ENCODE measurements at regions of chr1 and their contacts with region 1.

Region 1: DNA sequence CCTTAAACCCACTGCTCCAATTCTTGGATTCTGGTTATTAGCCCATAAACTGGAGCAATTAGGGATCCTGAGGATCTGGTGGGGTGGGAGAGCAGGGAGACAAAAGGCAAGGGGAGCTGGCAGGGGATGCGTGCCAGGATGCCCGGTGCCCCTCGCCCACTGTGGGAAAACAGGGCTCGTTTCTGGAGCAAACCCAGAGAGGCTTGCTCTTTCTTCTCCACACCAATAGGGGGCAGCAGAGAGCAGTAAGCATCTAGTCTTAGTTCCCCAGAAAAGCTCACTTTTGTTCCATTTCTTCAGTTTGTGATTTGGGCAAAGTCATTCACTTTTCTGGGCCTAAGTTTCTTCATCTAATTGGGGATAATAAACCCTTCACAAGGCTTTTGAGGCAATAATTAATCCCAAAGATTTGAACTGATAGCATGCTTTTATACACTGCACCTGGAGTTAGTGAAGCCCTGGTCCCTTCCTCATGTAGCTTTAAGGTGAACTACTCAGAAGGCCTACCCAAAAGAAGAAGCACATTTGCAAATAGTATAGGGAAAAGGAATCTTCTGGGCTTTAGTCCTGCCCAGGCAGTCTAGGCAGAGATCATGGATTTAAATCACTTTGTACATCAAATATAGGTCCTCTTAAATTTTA is 160.6 kb upstream of the USP24 start:
- DNase-seq: no peak
- H3K4me3 ChIP-seq: no peak overlapping the region
- H3K27me3 ChIP-seq: no peaks in the 10 kb centered on the region
- CTCF ChIP-seq: peak; percentile 92

Region 2: DNA sequence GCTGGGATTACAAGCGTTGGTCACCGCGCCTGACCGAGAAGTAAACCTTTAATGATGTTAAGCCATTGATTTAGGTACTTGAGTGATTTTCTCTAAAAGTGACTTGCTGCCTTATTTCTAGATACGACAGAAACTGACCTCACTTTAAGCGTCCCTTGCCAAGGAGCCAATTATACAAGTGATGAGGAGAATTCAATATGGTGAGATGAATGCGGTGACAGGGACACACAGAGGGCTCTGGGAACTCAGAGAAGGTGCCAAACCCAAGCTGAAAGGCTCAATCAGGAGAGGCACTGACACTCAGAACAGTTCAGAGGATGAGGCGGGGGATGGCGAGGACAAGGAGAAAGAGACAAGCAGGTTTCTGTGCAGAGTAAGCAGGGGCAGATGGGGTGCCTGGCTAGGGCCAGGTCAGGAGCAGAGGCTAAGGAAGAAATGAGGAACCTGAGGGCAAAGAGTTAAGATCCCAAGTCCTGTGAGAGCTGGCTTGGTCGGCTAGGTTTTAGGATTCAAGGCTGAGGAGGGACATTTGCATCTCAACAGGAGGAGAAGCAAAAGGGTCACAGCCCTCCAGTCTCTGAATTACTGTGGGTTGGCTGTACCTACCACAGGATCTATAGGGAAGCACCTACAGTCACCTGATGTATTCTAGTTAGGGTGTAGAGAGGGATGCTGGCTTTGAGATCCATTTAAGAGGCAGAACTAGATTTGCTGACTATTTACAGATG is 77.4 kb before region 1 on chr1:
- CTCF ChIA-PET with region 1: no interaction called
- POLR2A ChIA-PET with region 1: no interaction called
- DNase-seq: no peak
- H3K4me3 ChIP-seq: no peak overlapping the region
- H3K27me3 ChIP-seq: no peaks in the 10 kb centered on the region; the same call in 1 of the 2 replicates
- CTCF ChIP-seq: no peak

Region 3: GRCh38 chr1:55362558-55362957 is 13.2 kb before region 1 on chr1:
- CTCF ChIA-PET with region 1: interaction called, 21 read pairs
- POLR2A ChIA-PET with region 1: no interaction called
- DNase-seq: peak; percentile 65
- H3K4me3 ChIP-seq: no peak overlapping the region
- H3K27me3 ChIP-seq: no peaks in the 10 kb centered on the region
- CTCF ChIP-seq: no peak

Region 4: GRCh38 chr1:55400508-55400907 is 24.8 kb after region 1 on chr1:
- CTCF ChIA-PET with region 1: interaction called, 13 read pairs
- POLR2A ChIA-PET with region 1: no interaction called
- DNase-seq: peak; percentile 65
- H3K4me3 ChIP-seq: no peak overlapping the region
- H3K27me3 ChIP-seq: no peaks in the 10 kb centered on the region
- CTCF ChIP-seq: no peak

Region 5: GRCh38 chr1:55428944-55429931 is 53.5 kb after region 1 on chr1:
- CTCF ChIA-PET with region 1: interaction called, 25 read pairs
- POLR2A ChIA-PET with region 1: no interaction called
- DNase-seq: peak; percentile 97
- H3K4me3 ChIP-seq: no peak overlapping the region
- H3K27me3 ChIP-seq: no peaks in the 10 kb centered on the region
- CTCF ChIP-seq: no peak

Region 6: GRCh38 chr1:55478742-55479141 is 103.0 kb after region 1 on chr1:
- CTCF ChIA-PET with region 1: interaction called, 28 read pairs
- POLR2A ChIA-PET with region 1: no interaction called
- DNase-seq: no peak
- H3K4me3 ChIP-seq: no peak overlapping the region
- H3K27me3 ChIP-seq: no peaks in the 10 kb centered on the region
- CTCF ChIP-seq: 0 out of 2 replicates have a peak, but pooled peaks have one; percentile 11

Region 7: GRCh38 chr1:55506686-55507577 is 131.2 kb after region 1 on chr1:
- CTCF ChIA-PET with region 1: interaction called, 10 read pairs
- POLR2A ChIA-PET with region 1: no interaction called
- DNase-seq: no peak
- H3K4me3 ChIP-seq: no peak overlapping the region
- H3K27me3 ChIP-seq: no peaks in the 10 kb centered on the region
- CTCF ChIP-seq: no peak

Region 8: DNA sequence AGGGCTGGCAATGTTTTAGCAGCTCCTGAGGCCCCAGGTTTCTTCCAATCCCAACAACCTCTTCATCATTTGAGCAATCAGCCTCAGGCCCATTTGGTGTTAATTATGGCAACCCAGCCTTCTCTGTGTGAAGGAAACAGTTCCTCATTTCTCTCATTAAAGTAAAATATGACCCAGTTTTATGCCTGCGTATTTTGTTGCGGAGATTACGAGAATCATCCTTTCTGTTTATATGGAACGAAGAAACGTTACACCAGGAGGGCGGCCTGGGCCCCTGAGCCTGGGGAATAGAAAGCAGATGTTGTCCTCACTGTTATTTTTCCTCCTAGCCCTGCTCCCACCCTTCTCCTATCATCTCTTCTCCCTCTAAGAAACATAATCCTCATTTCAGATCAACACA is 171.7 kb after region 1 on chr1:
- CTCF ChIA-PET with region 1: no interaction called
- POLR2A ChIA-PET with region 1: no interaction called
- DNase-seq: peak; percentile 41
- H3K4me3 ChIP-seq: no peak overlapping the region
- H3K27me3 ChIP-seq: no peaks in the 10 kb centered on the region
- CTCF ChIP-seq: no peak

Region 9: GRCh38 chr1:56584910-56585528 is 1209.3 kb after region 1 on chr1:
- CTCF ChIA-PET with region 1: interaction called, 10 read pairs
- POLR2A ChIA-PET with region 1: no interaction called
- DNase-seq: no peak
- H3K4me3 ChIP-seq: no peak overlapping the region
- H3K27me3 ChIP-seq: no peaks in the 10 kb centered on the region
- CTCF ChIP-seq: peak; percentile 78

Measured in BJ (cell line).